Sciatic nerve (tissue), 2 donors: ENCODE measurements at regions of chr11 and their contacts with region 1.

Region 1: GRCh38 chr11:1694064-1694845 is 2.7 kb upstream of the KRTAP5-6 start:
- DNase-seq: peak; percentile 95
- ATAC-seq: peak; percentile 97

Region 2: GRCh38 chr11:1640076-1640946 is 53.9 kb before region 1 on chr11:
- intact Hi-C with region 1: no loop called
- DNase-seq: no peak
- ATAC-seq: no peak

Region 3: DNA sequence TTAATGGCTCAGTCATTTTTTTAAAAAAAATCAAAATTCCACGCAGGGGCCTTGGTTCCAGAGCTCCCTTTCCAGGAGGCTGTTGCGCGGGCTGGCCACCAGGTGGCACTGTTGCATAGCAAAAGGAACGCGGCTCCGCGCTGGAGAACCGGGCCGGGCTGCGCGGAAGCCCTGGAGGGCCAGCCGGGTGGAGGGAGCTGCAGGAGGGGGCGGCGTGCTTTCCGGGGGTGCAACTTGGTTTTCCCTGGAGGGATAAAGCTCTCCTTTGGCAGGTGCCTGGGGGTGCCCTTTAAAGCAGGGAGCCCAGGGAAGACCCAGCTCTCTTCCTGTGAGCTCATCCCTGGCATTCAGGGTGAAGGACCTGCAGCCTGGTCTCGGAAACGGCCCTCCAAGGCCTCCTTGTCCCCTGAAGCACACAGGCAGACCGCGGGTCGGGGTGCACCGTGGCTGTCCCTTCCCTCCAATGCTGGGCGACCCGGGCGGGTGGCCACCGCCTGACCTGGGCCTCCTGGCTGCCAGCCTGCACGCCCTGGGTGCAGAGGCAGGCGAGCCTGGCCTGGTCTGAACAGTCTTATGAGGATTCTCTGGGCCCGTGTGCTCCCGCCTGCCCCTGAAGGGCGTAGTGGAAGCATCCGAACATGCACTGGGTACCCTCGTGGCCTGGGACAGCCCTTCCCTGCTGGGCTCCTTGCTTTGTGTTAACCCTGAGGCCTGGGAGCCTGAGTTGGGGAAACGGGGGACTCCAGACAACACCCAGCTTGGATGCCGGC is 41.3 kb before region 1 on chr11:
- intact Hi-C with region 1: loop called (anchors 5 kb)
- DNase-seq: peak; percentile 90
- ATAC-seq: peak; percentile 90

Region 4: DNA sequence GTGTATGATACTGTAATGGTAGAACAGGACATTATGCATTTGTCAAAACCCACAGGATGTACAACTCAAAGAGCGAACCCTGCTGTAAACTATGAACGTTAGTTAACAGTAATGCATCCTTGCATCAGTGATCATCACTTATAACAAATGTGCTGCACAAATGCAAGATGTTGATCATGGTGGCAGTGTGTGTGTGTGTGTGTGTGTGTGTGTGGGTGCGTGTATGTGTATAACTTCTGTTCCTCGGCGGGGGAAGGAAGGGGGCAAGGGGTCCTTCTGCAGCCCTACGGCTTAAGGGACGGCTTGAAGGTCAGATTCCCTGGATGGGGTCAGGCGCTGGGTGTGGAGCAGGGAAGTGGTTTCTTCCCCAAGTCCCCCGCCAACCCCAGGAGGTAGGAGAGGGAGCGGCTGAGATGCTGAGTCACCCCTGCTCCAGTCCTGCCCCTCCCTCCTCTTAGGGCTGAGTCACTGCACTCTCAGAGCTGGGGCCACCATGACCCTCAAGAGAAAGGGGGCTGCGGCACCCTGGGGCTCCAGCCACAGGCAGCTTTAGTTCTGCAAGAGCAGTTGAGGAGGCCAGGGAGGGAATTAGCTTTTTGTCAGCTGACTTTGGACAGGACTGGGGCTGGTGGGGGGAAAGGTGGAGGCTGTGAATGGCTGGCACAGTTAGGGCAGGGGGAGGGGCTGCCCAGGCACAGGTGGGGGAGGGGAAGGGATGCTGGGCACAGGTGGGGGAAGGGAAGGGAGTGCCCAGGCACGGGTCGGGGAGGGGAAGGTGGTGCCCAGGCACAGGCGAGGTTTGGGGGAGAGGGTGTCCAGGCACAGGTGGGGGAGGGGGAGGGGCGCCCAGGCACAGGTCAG is 78.2 kb after region 1 on chr11:
- intact Hi-C with region 1: no loop called
- DNase-seq: peak; percentile 71
- ATAC-seq: peak; percentile 91

Region 5: GRCh38 chr11:1832211-1832919 is 138.1 kb after region 1 on chr11:
- intact Hi-C with region 1: loop called (anchors 2 kb)
- DNase-seq: peak; percentile 82
- ATAC-seq: peak; percentile 66

Region 6: GRCh38 chr11:2074266-2074825 is 380.1 kb after region 1 on chr11:
- intact Hi-C with region 1: no loop called
- DNase-seq: peak; percentile 28
- ATAC-seq: no peak